Psoas muscle (tissue), 8 donors: ENCODE measurements at regions of chr9 and their contacts with region 1.

Region 1: GRCh38 chr9:106862825-106863720 is at the start of gene ZNF462:
- DNase-seq: peak; percentile 43 to 72
- ATAC-seq: peak; percentile 52 to 64 (median 59)
- H3K4me3 ChIP-seq: peak within 1 kb of the TSS; percentile 79
- H3K27ac ChIP-seq: peak within 1 kb of the TSS; percentile 95
- H3K4me1 ChIP-seq: peaks cover 13% of the 10 kb centered on the region
- H3K27me3 ChIP-seq: no peaks in the 10 kb centered on the region
- CTCF ChIP-seq: peak; percentile 16
- total RNA-seq, gene ZNF462: 16.3 to 102 (median 24.6) TPM

Region 2: DNA sequence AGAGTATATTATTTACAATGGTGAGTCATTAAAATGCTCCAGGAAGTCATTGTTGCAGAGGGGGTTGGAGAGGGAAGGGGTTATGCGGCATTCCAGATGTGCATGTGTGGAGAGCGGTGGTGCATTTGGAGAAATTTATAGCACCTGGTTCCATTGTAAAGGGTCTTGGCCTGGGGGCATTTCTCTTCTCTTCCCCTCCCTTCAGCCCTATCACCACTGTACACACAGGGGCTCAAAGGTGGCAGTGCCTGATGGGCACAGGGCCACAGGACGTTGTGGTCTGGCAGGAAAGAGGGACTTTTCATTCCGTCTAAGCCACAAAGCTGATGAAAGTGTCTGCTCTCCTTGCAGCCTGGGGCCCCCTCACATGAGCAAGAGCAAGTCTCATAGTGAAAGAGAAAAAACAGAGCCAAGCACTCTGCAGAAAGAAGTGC is 442.5 kb before region 1 on chr9:
- intact Hi-C with region 1: no loop called
- DNase-seq: no peak
- ATAC-seq: no peak
- H3K4me3 ChIP-seq: no peak overlapping the region
- H3K27ac ChIP-seq: no peak overlapping the region
- H3K4me1 ChIP-seq: no peaks in the 10 kb centered on the region
- H3K27me3 ChIP-seq: no peaks in the 10 kb centered on the region
- CTCF ChIP-seq: no peak

Region 3: GRCh38 chr9:106704056-106704640 is 158.9 kb before region 1 on chr9:
- intact Hi-C with region 1: loop called (anchors 5 to 10 kb)
- DNase-seq: no peak
- ATAC-seq: no peak
- H3K4me3 ChIP-seq: no peak overlapping the region
- H3K27ac ChIP-seq: no peak overlapping the region
- H3K4me1 ChIP-seq: peaks cover 14% of the 10 kb centered on the region
- H3K27me3 ChIP-seq: no peaks in the 10 kb centered on the region
- CTCF ChIP-seq: no peak

Region 4: DNA sequence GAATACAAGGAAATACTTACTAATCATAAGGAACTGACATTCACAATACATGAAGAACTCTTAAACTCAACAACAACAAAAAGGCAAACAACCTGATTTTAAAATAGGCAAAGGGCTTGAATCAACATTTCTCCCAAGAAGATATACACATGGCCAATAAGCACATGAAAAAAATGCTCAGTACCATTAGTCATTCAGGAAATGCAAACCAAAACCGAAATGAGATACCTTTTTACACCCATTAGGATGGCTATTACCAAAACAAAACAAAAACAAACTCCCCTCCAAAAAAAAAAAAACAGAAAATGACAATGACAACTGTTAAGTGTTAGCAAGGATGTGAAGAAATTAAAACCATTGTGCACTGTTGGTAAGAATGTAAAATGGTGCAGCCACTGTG is 104.2 kb before region 1 on chr9:
- intact Hi-C with region 1: loop called in 1 of 2 experiments (anchors 5 kb)
- DNase-seq: no peak
- ATAC-seq: peak in 1 of 4 donors; percentile 23
- H3K4me3 ChIP-seq: no peak overlapping the region
- H3K27ac ChIP-seq: peak overlapping the region; percentile 89
- H3K4me1 ChIP-seq: peaks cover 33% of the 10 kb centered on the region
- H3K27me3 ChIP-seq: no peaks in the 10 kb centered on the region
- CTCF ChIP-seq: no peak

Region 5: DNA sequence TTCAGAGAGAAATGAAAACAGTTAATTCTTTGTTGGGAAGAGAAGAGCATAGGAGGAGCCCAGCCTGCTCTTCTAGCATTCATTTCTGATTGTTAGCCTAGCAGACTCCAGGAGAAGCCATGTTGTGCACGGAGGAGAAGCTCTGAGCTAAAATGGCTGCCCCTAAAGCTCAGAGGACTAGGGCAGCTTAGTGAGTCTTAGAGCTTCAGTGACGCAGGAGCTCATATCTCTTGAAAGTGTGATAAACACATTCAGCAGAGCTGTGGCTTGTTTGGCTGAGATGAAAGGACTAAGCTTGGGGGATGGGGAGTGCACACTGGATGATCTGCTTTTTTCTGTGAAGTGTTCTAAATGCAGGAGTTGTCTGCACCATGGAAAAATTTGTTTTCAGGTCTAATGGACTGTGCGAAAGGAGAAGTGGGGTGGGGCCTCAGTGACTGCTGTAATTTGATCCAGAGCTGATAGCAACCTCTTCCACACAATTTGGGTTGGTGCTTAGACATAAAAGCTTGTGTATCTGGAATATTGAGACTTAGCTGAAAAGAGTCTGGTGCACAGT is 58.3 kb after region 1 on chr9:
- intact Hi-C with region 1: loop called in 1 of 2 experiments (anchors 2 kb)
- DNase-seq: no peak
- ATAC-seq: peak; percentile 49 to 71 (median 67)
- H3K4me3 ChIP-seq: peak overlapping the region; percentile 56
- H3K27ac ChIP-seq: peak overlapping the region; percentile 92
- H3K4me1 ChIP-seq: peaks cover 49% of the 10 kb centered on the region
- H3K27me3 ChIP-seq: no peaks in the 10 kb centered on the region
- CTCF ChIP-seq: no peak

Region 6: DNA sequence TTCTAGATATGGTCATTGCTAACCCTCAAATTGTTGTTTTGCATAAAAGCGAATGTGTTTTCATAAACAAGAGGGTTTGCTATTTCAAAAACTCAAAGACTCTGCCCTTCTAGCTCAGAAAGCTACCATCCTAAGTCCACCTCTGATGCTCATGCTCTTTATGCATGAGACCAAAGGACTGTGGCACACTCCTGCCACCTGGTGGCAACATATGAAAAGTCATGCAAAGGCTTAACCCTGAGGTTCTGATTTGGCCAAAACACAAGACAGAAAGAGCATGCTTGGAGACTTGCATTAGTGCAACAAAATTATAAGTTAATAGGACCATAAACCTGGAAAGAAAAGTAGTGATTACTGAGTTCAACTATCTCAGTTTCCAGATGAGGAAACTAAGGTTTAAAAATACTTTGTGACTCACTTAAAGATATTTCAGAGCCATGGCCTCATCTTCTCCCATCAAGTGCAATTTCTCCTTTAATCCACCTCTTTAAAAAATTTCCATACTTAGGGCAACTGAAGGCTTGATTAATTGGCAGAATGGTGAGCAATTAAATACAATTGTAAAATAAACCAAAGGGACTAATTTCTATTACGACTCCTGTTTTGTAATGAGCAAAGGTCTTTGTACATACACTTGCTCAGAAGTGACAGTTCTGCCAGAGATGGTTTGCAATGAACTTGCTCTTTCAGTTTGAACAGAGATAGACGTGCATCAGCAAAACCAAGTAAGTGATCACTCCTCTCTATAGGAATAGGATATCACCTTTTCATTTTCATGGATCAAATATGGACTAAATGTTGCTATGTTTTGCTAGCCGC is 309.3 kb after region 1 on chr9:
- intact Hi-C with region 1: loop called (anchors 10 kb)
- DNase-seq: peak; percentile 69 to 80
- ATAC-seq: peak; percentile 36 to 69 (median 52)
- H3K4me3 ChIP-seq: no peak overlapping the region
- H3K27ac ChIP-seq: peak overlapping the region; percentile 8
- H3K4me1 ChIP-seq: peaks cover 39% of the 10 kb centered on the region
- H3K27me3 ChIP-seq: no peaks in the 10 kb centered on the region
- CTCF ChIP-seq: peak; percentile 95